Dorsolateral prefrontal cortex (tissue), 120 donors: ENCODE measurements at regions of chr2 and their contacts with region 1.

Region 1: GRCh38 chr2:231900486-231900942 is 25.7 kb downstream of the NPPC start:
- DNase-seq: peak in 8 of 10 donors; percentile 14 to 71 (median 54)
- H3K4me3 ChIP-seq: no peak overlapping the region
- H3K27ac ChIP-seq: no peak overlapping the region
- H3K27me3 ChIP-seq: no peaks in the 10 kb centered on the region
- CTCF ChIP-seq: peak in 55 of 56 donors; percentile 30 to 74 (median 65)

Region 2: DNA sequence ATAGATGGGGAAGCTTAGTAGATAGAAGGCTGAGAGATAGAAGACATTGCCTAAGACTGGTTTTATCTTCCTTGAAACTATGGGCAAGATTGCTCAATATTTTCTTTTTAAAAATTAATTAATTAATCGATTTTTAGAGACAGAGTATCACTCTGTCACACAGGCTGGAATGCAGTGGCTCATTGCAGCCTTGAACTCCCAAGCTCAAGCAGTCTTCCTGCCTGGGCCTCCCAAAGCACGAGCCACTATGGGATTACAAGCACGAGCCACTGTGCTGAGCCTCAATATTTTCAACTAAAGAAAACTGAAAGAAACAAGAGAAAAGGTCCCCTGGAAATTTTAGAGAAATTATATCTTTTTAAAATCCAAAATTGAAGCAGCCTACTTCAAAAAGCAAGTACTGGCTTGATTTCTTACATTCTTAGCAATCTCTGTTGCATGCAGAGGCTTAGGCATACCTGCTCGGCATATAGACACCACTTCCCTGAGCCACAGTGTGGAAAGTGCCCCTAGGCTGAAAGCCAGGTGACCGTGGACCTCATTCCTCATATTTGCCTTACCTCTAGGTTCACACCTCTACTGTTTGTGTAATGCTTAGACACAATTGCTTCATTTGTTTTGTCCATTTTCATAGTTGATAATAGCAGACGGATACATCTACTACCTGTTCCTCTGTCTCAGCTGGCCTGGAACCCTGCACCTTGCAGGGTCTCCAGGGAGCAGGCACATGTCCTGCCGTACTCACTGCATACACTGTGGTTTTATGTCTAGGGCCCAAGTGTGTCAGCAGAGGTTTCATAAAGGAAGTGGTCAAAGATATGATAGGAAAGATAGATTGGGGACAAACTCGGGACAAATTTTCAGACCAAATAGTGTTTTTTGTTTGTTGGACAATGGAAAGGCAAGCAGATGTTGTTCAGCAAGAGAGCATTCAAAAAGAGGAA is 311.5 kb after region 1 on chr2:
- intact Hi-C with region 1: no loop called
- DNase-seq: no peak
- H3K4me3 ChIP-seq: no peak overlapping the region
- H3K27ac ChIP-seq: no peak overlapping the region
- H3K27me3 ChIP-seq: no peaks in the 10 kb centered on the region
- CTCF ChIP-seq: no peak

Region 3: GRCh38 chr2:232321156-232321816 is 420.8 kb after region 1 on chr2:
- intact Hi-C with region 1: loop called (anchors 5 kb)
- DNase-seq: peak in 3 of 10 donors; percentile 8 to 38 (median 13)
- H3K4me3 ChIP-seq: no peak overlapping the region
- H3K27ac ChIP-seq: peak overlapping the region in 1 of 59 donors; percentile 67
- H3K27me3 ChIP-seq: no peaks in the 10 kb centered on the region
- CTCF ChIP-seq: no peak

Region 4: DNA sequence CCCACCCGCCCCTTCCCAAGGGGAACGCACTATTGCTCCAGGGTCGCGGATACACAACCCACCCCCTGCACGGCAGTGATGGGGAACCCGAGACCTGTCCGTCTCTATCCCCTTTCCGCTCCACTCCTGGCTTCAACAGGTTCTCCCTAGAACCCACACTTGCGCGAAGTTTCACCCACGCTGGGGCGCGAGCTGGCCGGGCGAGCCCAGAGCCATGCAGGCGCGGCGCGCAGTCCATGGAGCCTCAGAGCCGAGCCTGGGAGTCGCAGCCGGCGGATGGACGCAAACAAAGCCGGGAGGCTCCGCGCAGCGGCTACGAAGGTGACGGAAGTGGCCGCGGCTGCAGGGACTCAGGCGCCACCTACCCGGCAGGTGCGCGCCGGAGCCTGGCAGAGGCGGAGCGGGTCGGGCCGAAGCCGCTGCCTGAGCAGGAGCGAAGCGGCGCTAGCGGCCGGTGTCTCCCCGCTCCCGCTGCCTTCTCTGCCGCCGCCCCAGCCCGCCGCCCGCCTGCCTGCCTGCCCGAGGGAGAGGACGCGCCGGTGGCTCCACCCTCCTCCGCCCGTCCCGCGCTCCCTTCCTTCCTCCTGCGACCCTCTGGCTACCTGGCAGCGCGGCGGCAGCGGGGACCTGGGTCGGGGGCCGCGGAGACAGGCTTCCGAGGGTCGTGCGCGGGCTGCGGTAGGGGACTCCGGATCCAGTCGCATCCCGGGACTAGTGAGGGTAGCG is 520.1 kb after region 1 on chr2:
- intact Hi-C with region 1: loop called in 1 of 2 experiments (anchors 5 kb)
- DNase-seq: peak in 2 of 10 donors; percentile 2 to 26
- H3K4me3 ChIP-seq: peak overlapping the region in 33 of 59 donors; percentile 3 to 53 (median 23)
- H3K27ac ChIP-seq: no peak overlapping the region
- H3K27me3 ChIP-seq: peaks cover 0 to 73% (median 63%) of the 10 kb centered on the region in 45 donors
- CTCF ChIP-seq: no peak

Region 5: GRCh38 chr2:232444409-232445148 is 544.1 kb after region 1 on chr2:
- intact Hi-C with region 1: loop called (anchors 5 kb)
- DNase-seq: peak in 3 of 10 donors; percentile 13 to 46 (median 36)
- H3K4me3 ChIP-seq: no peak overlapping the region
- H3K27ac ChIP-seq: no peak overlapping the region
- H3K27me3 ChIP-seq: no peaks in the 10 kb centered on the region
- CTCF ChIP-seq: peak in 51 of 56 donors; percentile 12 to 60 (median 42)

Region 6: DNA sequence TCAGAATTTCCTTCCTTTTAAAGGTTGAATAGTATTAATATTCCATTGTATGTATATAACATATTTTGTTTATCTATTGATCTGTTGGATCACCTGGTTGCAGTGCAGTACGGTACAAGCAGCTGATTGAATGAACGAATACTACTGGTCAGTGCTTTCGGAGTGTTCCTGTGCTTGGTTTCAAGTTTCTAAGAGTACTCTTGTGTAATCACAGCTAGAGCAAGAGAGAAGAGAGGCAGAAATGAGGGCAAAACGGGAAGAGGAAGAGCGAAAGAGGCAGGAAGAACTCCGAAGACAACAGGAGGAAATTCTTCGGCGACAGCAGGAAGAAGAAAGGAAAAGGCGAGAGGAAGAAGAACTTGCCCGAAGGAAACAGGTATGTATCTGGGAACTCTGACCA is 916.1 kb after region 1 on chr2:
- intact Hi-C with region 1: no loop called
- DNase-seq: no peak
- H3K4me3 ChIP-seq: no peak overlapping the region
- H3K27ac ChIP-seq: no peak overlapping the region
- H3K27me3 ChIP-seq: no peaks in the 10 kb centered on the region
- CTCF ChIP-seq: no peak